Psoas muscle (tissue), 8 donors: ENCODE measurements at regions of chr2 and their contacts with region 1.

Region 1: DNA sequence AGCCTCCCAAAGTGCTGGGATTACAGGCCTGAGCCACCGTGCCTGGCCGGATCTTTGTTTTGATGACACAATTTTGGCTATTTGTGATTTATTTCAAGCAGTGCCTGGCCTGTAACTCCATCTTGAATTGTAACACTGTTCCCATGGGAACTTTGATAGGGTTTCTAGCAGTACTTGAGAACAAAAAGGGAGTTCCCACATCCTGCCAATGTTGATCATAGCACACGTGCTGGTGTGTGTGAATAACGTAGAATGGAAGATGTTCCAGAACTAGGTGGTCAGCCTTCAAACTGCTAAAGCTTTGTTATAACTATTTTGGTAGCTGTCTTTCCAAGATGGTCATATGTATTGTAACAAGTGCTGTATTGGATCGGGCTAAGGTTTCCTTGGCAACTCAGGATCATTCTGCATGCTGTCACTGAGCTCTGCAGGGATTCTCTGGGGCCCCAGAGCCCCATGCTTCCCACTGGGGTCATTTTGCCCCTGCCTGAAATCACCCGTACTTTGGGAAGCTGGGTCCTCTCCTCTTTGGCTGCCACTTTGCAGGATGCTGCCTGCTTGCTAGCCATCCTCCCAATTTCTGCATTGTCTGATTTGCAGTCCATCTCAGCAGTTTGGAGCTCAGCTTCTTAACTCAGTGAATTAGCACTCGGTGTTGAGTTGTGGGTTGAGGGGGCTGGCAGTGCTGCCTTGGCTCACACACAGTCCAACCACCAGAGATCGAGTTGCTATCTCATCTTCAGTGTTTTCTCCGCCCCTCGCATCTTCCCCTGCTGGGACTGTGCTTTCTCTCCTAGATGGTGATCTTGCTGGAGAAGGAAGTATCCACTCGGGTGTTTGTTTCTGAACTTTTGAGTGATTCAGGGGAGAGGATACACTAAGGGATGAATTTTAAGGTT is 26.8 kb downstream of the SH3RF3 start:
- DNase-seq: no peak
- ATAC-seq: peak in 2 of 4 donors; percentile 26 to 49
- H3K4me3 ChIP-seq: no peak overlapping the region
- H3K27ac ChIP-seq: no peak overlapping the region
- H3K4me1 ChIP-seq: peaks cover 15% of the 10 kb centered on the region
- H3K27me3 ChIP-seq: no peaks in the 10 kb centered on the region
- CTCF ChIP-seq: no peak

Region 2: DNA sequence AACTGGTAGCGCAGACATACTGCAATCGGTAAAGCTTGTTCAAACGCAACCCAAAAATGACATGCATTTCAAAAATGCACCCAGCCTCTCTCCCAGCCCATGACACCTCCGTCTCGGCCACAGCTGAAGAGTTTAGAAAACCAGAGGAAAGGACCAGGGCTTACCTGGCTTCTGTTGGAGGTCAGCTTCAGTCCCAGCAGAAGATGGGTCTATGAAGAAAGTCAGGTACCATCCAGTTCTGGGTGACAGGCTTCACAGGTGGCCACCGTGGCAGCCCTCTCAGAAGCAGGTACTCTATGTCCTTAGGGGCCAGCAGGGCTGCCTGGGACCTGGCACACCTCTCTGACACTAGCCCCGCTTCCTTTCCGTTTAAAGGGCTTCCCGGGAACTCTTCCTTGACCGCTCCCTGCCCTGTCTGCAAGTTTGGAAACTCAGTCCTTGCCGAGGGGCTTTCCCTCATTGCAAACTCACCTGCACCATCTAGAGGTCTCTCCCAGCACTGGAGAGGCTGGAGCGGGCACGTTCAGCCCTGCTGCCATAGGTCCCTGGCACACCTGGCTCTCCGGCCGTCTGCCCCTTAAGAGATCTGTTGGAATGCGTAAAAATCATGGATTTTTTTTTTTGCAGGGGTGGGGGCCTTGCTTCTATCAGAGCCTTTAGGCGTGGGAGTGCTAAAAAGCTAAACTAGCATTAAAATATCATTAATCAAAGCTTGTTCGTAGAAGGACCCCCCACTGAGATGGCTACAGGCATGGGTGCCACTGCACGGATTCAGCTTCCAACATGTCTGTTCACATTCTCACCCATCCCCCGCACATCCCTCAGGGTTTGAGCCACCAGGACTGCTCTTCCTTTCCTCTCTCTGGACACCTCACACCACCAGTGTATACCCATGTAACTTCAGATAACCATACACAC is 166.7 kb before region 1 on chr2 and contains the start of gene EDAR:
- intact Hi-C with region 1: no loop called
- DNase-seq: no peak
- ATAC-seq: peak; percentile 70 to 79 (median 75)
- H3K4me3 ChIP-seq: no peak within 1 kb of the TSS
- H3K27ac ChIP-seq: no peak within 1 kb of the TSS
- H3K4me1 ChIP-seq: no peaks in the 10 kb centered on the region
- H3K27me3 ChIP-seq: peaks cover 0 to 16% (median 0%) of the 10 kb centered on the region in 3 donors
- CTCF ChIP-seq: peak; percentile 41
- total RNA-seq, gene EDAR: not detected

Region 3: GRCh38 chr2:109138449-109138848 is 17.4 kb before region 1 on chr2:
- intact Hi-C with region 1: loop called in 1 of 2 experiments (anchors 2 kb)
- DNase-seq: no peak
- ATAC-seq: no peak
- H3K4me3 ChIP-seq: no peak overlapping the region
- H3K27ac ChIP-seq: no peak overlapping the region
- H3K4me1 ChIP-seq: no peaks in the 10 kb centered on the region
- H3K27me3 ChIP-seq: no peaks in the 10 kb centered on the region
- CTCF ChIP-seq: no peak

Region 4: DNA sequence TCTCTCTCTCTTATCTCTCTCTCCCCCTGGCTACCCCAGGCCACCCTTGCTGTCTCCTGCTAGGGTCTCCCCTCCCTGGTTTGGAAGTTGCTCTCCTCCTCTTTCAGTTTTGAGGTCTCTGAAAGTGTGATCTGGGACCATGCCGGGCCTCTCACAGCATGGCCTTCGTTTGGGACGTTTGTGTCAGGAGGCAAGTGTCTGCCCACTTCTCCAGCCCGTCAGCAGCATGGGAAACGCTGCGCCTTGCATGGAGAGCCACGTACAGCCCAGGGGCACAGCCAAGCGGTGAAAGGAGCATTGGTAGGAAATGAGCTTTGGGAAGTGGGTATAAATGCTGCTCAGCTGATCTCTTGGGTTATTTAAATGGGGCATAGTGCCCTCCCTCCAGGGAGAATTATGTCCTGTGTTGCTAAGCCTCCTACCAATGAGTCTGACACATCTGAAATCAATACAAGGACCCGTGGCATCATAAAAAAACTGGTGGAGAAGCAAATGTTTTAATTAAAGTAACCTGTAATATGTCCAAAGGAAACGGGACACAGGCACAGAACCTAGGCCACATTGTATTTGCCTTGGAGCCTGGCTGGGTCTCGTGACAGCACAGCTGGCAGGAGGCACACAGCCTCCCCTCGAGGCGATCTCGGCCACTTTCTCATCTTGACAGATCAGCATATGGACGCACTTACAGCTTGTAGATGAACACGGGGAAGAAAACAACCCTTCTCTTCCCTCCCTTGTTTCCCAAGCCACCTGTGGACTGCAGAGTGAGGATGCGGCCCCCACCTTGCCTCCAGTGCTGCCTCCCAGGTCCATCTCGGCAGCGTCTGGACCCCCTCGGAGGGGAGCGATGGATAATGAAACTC is 45.9 kb after region 1 on chr2:
- intact Hi-C with region 1: no loop called
- DNase-seq: no peak
- ATAC-seq: peak; percentile 27 to 53 (median 36)
- H3K4me3 ChIP-seq: no peak overlapping the region
- H3K27ac ChIP-seq: peak overlapping the region; percentile 46
- H3K4me1 ChIP-seq: peaks cover 32% of the 10 kb centered on the region
- H3K27me3 ChIP-seq: no peaks in the 10 kb centered on the region
- CTCF ChIP-seq: no peak

Region 5: DNA sequence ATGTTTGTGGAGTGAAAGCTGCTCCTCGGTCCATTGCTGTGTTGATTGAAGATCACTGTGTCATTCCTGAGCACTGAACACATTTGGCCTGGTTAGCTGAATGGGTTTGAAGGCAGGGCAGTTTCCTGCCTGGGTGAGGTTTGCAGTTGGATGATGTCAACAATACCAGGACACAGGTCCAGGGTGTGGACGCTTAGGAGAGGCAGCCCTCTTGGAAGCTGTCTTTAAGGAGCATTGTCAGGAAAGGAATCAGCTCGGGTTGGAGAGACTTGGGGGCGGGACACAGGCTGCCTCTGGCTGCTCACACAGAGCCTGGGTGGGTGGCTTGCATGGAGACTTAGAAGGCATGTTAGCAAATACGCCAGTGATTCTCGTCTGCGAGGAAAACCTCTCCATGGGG is 220.3 kb after region 1 on chr2:
- intact Hi-C with region 1: no loop called
- DNase-seq: peak in 1 of 2 donors; percentile 26
- ATAC-seq: no peak
- H3K4me3 ChIP-seq: no peak overlapping the region
- H3K27ac ChIP-seq: no peak overlapping the region
- H3K4me1 ChIP-seq: peaks cover 32% of the 10 kb centered on the region
- H3K27me3 ChIP-seq: no peaks in the 10 kb centered on the region
- CTCF ChIP-seq: no peak